ENCODE measurements at regions of chrX and their contacts with region 1.

Region 1: GRCh38 chrX:69027181-69028005 is 137.9 kb downstream of the PJA1 start:
- DNase-seq: no peak
- ATAC-seq: peak in 1 of 4 donors; percentile 28
- H3K4me3 ChIP-seq: no peak overlapping the region
- H3K27ac ChIP-seq: no peak overlapping the region
- H3K4me1 ChIP-seq: no peaks in the 10 kb centered on the region
- H3K27me3 ChIP-seq: peaks cover 0 to 8% (median 0%) of the 10 kb centered on the region in 3 donors
- CTCF ChIP-seq: no peak

Region 2: DNA sequence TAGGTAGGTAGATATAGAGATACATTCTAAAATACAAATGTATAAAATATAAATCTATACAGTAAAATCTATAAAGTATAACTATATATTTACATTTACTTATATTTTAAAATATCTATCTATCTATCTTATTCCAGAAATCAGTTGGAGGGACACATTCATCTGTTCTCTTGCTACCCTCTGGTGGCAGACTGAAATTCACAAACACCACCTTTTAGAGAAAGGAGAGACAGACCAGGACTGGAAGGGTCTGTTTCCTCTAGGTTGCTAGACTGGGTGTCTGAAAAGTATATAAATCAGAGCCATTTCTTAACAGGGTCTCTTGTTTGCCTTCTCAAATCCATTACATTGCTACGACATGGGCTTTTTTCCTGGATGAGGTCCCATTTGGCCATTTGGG is 937.1 kb before region 1 on chrX:
- intact Hi-C with region 1: no loop called
- DNase-seq: no peak
- ATAC-seq: no peak
- H3K4me3 ChIP-seq: no peak overlapping the region
- H3K27ac ChIP-seq: no peak overlapping the region
- H3K4me1 ChIP-seq: no peaks in the 10 kb centered on the region
- H3K27me3 ChIP-seq: peaks cover 0 to 10% (median 0%) of the 10 kb centered on the region in 3 donors
- CTCF ChIP-seq: peak; percentile 11

Region 3: DNA sequence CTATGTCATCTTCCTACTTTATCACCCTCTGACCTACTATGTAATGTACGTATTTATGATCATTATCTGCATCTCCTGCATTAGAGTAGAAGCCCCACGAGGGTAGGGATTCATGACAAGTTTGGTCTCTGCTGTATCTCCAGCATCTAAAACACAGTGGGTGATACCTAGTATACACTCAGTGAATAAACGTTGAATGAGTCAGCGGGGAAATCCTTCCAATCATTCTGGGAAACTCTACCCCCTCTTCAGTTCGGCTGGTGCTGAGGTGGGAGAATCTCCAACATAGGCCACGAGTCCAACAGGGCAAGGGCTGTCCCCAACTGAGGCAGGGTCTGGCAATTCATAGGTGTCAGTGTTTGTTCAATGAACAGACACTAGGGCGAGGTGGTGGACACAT is 273.0 kb before region 1 on chrX:
- intact Hi-C with region 1: loop called in 1 of 2 experiments (anchors 10 kb)
- DNase-seq: no peak
- ATAC-seq: no peak
- H3K4me3 ChIP-seq: no peak overlapping the region
- H3K27ac ChIP-seq: no peak overlapping the region
- H3K4me1 ChIP-seq: no peaks in the 10 kb centered on the region
- H3K27me3 ChIP-seq: peaks cover 0 to 23% (median 0%) of the 10 kb centered on the region in 3 donors
- CTCF ChIP-seq: no peak

Region 4: GRCh38 chrX:69268611-69269010 is 241.2 kb after region 1 on chrX:
- intact Hi-C with region 1: no loop called
- DNase-seq: no peak
- ATAC-seq: no peak
- H3K4me3 ChIP-seq: no peak overlapping the region
- H3K27ac ChIP-seq: no peak overlapping the region
- H3K4me1 ChIP-seq: no peaks in the 10 kb centered on the region
- H3K27me3 ChIP-seq: peaks cover 0 to 19% (median 0%) of the 10 kb centered on the region in 3 donors
- CTCF ChIP-seq: no peak

Measured in psoas muscle (tissue), 8 donors.